ENCODE measurements at regions of chr16 and their contacts with region 1.

Region 1: DNA sequence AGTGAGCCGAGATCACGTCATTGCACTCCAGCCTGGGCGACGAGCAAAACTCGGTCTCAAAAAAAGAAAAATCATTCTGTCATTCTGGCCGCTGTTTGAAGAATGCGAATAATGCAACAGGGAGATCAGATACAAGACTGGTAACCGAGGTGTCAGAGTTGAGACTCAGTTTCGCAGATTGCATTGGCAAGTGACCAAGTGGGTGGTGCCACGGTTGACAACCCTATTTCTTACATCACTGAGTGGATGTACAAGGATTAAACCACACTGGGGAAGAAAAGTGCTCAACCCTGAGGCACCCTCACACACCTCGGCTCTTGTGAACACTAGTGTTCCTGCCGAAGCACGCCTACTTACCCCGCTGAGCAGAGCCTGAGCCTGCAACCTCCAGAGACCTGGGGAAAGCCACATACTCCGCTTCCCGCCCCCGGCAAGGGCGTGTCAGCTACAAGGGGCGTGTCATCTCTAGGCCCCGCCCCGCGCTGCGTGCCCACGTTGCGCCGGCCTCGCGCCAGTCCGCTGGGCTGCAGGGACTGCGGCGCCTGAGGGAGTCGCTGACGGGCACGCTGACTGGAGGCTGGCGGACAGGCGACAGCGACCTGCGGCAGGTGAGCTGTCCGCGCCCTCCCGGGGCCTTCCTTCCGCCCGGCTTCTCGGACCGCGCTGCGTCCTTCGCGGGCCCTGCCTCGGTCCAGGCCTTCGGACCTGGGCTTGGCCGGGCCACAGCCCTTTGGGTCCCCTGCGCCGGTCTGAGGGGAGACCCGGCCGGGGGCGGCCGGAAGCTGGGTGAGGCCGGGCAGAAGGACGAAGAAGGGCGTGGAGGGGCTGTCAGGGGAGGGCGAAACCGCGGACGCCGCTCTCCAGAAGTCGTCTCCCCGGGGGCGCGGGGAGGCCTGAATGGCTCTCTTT is at the start of gene HMOX2:
- DNase-seq: peak; percentile 89
- H3K27ac ChIP-seq: peak within 1 kb of the TSS; percentile 86
- CTCF ChIP-seq: peak; percentile 87

Region 2: GRCh38 chr16:4487955-4488498 is 11.9 kb after region 1 on chr16:
- CTCF ChIA-PET with region 1: interaction called, 11 read pairs
- POLR2A ChIA-PET with region 1: interaction called, 3 read pairs
- DNase-seq: no peak
- H3K27ac ChIP-seq: peak overlapping the region; percentile 60
- CTCF ChIP-seq: no peak

Measured in RWPE1 (cell line).